ENCODE measurements at regions of chr10 and their contacts with region 1.

Region 1: DNA sequence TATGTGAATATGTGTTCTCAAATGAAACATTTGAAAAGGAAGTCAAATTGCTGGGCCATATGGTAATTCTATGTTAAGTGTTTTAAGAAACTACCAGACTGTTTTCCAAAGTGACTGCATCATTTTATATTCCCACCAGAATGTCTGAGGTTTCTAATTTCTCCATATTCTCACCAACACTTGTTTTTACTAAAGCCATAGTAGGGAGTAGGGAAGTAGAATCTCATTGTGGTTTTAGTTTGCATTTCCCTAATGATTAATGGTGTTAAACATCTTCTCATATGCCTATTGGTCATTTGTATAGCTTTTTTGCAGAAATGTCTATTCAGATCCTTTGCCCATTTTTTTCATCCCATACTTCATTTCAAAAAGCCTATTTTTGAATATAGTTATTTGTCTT is 9.1 kb upstream of the SEMA4G start:
- DNase-seq: no peak
- ATAC-seq: no peak
- H3K4me3 ChIP-seq: no peak overlapping the region
- H3K27ac ChIP-seq: no peak overlapping the region
- H3K4me1 ChIP-seq: peaks cover 0 to 6% (median 0%) of the 10 kb centered on the region in 12 donors
- H3K27me3 ChIP-seq: no peaks in the 10 kb centered on the region
- CTCF ChIP-seq: no peak
- POLR2A ChIP-seq: no peak

Region 2: DNA sequence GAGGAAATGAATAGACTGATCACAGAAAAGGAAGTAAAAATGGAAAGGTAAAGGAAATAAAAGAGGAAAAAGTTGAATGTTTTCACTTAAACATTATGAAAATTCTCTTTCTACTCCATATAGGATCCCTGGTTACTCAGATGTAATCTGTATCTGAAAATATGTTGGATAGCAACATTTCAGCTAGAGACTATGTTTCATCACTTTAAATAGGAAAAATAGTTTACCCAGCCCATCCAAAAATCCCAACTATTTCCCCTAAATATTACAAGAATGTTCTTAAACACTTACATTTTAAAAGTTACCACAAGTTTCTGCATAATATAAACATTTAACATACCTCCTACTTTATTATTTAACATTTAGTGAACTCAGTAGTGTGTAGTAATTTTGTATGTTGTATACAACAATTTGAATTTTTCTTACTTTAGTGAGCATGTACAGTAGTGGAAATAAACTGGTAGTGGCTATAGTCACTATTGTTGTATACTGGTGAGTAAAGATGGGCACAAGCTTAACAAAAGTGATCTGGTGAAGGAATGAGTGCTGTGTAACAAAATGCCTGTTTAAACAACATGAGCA is 20.4 kb before region 1 on chr10:
- intact Hi-C with region 1: loop called in 1 of 10 experiments (anchors 2 kb)
- DNase-seq: no peak
- ATAC-seq: no peak
- H3K4me3 ChIP-seq: no peak overlapping the region
- H3K27ac ChIP-seq: no peak overlapping the region
- H3K4me1 ChIP-seq: no peaks in the 10 kb centered on the region
- H3K27me3 ChIP-seq: no peaks in the 10 kb centered on the region
- CTCF ChIP-seq: no peak
- POLR2A ChIP-seq: no peak

Region 3: DNA sequence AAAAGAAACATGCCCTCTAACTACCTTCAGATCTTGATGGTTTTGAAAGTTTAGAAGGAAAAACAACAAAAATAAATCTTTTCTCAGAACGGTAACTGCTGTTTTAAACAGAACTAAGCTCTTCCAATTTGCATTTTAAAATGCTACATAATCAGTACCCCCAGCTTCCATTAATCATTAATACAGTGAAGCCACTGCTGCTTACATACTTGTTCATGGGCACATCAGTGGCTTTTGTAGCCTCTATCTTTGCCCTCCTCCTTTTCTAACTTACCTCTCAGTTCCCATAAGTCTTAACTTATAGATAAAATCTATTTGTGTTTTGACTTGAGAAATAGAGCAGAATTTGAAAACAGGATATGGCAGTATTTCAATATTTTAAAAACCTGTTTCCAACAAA is 518.7 kb after region 1 on chr10:
- intact Hi-C with region 1: no loop called
- DNase-seq: no peak
- ATAC-seq: no peak
- H3K4me3 ChIP-seq: no peak overlapping the region
- H3K27ac ChIP-seq: no peak overlapping the region
- H3K4me1 ChIP-seq: peaks cover 0 to 5% (median 0%) of the 10 kb centered on the region in 12 donors
- H3K27me3 ChIP-seq: no peaks in the 10 kb centered on the region
- CTCF ChIP-seq: no peak
- POLR2A ChIP-seq: no peak